K562 (cell line): ENCODE measurements at regions of chr9 and their contacts with region 1.

Region 1: GRCh38 chr9:90870621-90871326 is 69.2 kb downstream of the SYK start:
- DNase-seq: peak; percentile 14 to 54 (median 20)
- ATAC-seq: peak; percentile 69
- H3K4me3 ChIP-seq: no peak overlapping the region
- H3K27ac ChIP-seq: no peak overlapping the region
- H3K4me1 ChIP-seq: no peaks in the 10 kb centered on the region; a peak in 1 of 5 replicates
- H3K27me3 ChIP-seq: no peaks in the 10 kb centered on the region
- CTCF ChIP-seq: peak; percentile 51 to 74 (median 62)
- EP300 ChIP-seq: no peak
- POLR2A ChIP-seq: no peak
- RAD21 ChIP-seq: peak; percentile 73 to 74

Region 2: GRCh38 chr9:90773617-90774016 is 97.2 kb before region 1 on chr9:
- CTCF ChIA-PET with region 1: no interaction called
- POLR2A ChIA-PET with region 1: no interaction called
- in situ Hi-C with region 1: no loop called
- intact Hi-C with region 1: loop called (anchors 2 kb)
- DNase-seq: peak in 3 of 4 experiments; percentile 9 to 17 (median 9)
- ATAC-seq: peak; percentile 71
- H3K4me3 ChIP-seq: no peak overlapping the region
- H3K27ac ChIP-seq: no peak overlapping the region
- H3K4me1 ChIP-seq: no peaks in the 10 kb centered on the region
- H3K27me3 ChIP-seq: no peaks in the 10 kb centered on the region
- CTCF ChIP-seq: peak; percentile 36 to 50 (median 45)
- EP300 ChIP-seq: no peak
- POLR2A ChIP-seq: no peak
- RAD21 ChIP-seq: peak; percentile 20 to 50; a peak in 2 of 4 replicates

Region 3: GRCh38 chr9:90855208-90855990 is 15.4 kb before region 1 on chr9:
- CTCF ChIA-PET with region 1: no interaction called
- POLR2A ChIA-PET with region 1: no interaction called
- in situ Hi-C with region 1: no loop called
- intact Hi-C with region 1: no loop called
- DNase-seq: no peak
- ATAC-seq: no peak
- H3K4me3 ChIP-seq: no peak overlapping the region
- H3K27ac ChIP-seq: no peak overlapping the region
- H3K4me1 ChIP-seq: peaks cover 6 to 7% of the 10 kb centered on the region in 2 experiments; a peak in 3 of 5 replicates
- H3K27me3 ChIP-seq: no peaks in the 10 kb centered on the region
- CTCF ChIP-seq: no peak
- EP300 ChIP-seq: no peak
- POLR2A ChIP-seq: no peak
- RAD21 ChIP-seq: no peak